PC-9 (cell line): ENCODE measurements at regions of chr11 and their contacts with region 1.

Region 1: GRCh38 chr11:3841426-3842350 is 929 bp upstream of the RHOG start:
- DNase-seq: peak; percentile 64 to 76
- H3K4me3 ChIP-seq: peak overlapping the region; percentile 68
- H3K27ac ChIP-seq: peak overlapping the region; percentile 39
- H3K4me1 ChIP-seq: peaks cover 10% of the 10 kb centered on the region
- H3K27me3 ChIP-seq: no peaks in the 10 kb centered on the region
- CTCF ChIP-seq: peak; percentile 70

Region 2: DNA sequence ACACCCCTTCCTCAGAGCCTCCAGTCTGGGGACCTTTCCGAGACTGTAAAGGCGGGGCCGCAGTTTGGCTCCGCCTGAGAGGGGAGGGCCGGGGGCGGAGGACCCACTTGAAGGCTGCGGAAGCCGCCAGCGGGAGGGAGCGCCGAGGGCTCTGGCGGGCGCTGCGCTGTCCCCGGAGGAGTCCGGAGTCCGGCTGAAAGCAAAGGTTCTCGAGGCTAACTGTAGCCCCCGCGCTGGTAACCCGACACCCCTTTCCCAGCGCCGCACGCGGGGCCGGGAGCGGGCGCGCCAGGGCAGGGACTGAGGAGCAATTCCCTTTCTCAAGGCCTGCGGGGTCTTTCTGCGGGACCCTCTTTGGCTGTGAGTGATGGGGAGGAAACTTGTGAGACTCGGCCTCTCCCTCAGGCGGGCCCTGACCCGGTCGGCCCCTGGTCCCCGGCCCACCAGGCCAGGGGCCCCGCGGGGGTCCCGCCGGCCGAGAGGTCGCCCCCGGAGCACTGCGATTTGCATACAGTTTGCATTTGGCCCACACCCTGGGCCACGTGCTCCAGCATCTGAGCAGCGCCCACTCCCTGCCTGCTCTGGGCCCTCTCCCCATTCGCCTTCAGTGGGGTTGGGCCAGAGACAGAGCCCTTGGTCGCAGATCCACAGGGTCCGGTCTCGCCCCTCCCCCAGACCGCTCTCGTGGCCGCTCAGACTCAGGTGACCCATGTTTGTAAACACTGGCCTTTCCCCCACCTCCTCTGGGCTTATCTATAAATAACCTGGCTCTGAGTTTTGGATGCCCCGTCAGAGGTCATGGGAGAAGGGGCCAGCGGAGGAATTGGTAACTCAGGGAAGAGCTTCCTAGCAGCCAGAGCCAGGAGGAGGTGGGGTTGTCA is 199.4 kb before region 1 on chr11:
- CTCF ChIA-PET with region 1: no interaction called
- POLR2A ChIA-PET with region 1: interaction called, 10 read pairs
- intact Hi-C with region 1: no loop called
- DNase-seq: peak; percentile 37 to 71
- H3K4me3 ChIP-seq: peak overlapping the region; percentile 55
- H3K27ac ChIP-seq: no peak overlapping the region
- H3K4me1 ChIP-seq: no peaks in the 10 kb centered on the region; the same call in 1 of the 2 replicates
- H3K27me3 ChIP-seq: no peaks in the 10 kb centered on the region
- CTCF ChIP-seq: no peak

Region 3: GRCh38 chr11:3797329-3798095 is 44.2 kb before region 1 on chr11 and contains the start of gene NUP98:
- CTCF ChIA-PET with region 1: no interaction called
- POLR2A ChIA-PET with region 1: interaction called, 14 read pairs
- intact Hi-C with region 1: no loop called
- DNase-seq: peak; percentile 97 to 98
- H3K4me3 ChIP-seq: peak within 1 kb of the TSS; percentile 86
- H3K27ac ChIP-seq: peak within 1 kb of the TSS; percentile 59
- H3K4me1 ChIP-seq: peaks cover 17% of the 10 kb centered on the region
- H3K27me3 ChIP-seq: no peaks in the 10 kb centered on the region
- CTCF ChIP-seq: no peak
- total RNA-seq, gene NUP98: 49.8 and 59.7 TPM in 2 replicates

Region 4: GRCh38 chr11:3807909-3808860 is 33.5 kb before region 1 on chr11 and contains the start of gene PGAP2:
- CTCF ChIA-PET with region 1: interaction called, 4 read pairs
- POLR2A ChIA-PET with region 1: no interaction called
- intact Hi-C with region 1: loop called (anchors 2 kb)
- DNase-seq: peak; percentile 62 to 63
- H3K4me3 ChIP-seq: peak within 1 kb of the TSS; percentile 86
- H3K27ac ChIP-seq: peak within 1 kb of the TSS; percentile 32; the same call in 1 of the 2 replicates
- H3K4me1 ChIP-seq: peaks cover 3% of the 10 kb centered on the region
- H3K27me3 ChIP-seq: no peaks in the 10 kb centered on the region
- CTCF ChIP-seq: peak; percentile 64; the same call in 1 of the 2 replicates
- total RNA-seq, gene PGAP2: 37.7 and 39.5 TPM in 2 replicates

Region 5: DNA sequence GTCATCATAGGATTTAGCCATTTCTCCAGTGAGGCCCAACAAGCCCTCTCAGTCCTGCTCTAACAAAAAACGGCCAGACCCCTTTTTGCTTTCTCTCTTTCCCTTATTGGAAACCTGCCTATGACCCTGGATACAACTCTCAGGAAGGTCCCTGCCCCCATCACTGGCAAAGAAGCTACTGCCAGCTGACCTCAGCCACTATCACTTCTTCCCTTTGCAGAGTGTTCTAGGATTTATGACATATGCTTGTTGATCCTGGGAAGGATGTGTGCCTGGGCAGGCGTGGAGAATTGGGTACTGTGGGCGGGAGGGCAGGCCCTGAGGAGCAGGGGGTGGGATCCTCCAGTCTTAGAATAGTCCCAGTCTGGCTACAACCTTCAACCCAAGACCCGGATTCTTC is 25.8 kb before region 1 on chr11:
- CTCF ChIA-PET with region 1: interaction called, 3 read pairs
- POLR2A ChIA-PET with region 1: no interaction called
- intact Hi-C with region 1: loop called (anchors 1 kb)
- DNase-seq: no peak
- H3K4me3 ChIP-seq: no peak overlapping the region
- H3K27ac ChIP-seq: 0 out of 2 replicates have a peak overlapping the region, but pooled peaks have one; percentile 19
- H3K4me1 ChIP-seq: peaks cover 19% of the 10 kb centered on the region
- H3K27me3 ChIP-seq: no peaks in the 10 kb centered on the region
- CTCF ChIP-seq: no peak

Region 6: GRCh38 chr11:4167758-4168157 is 326.1 kb after region 1 on chr11:
- CTCF ChIA-PET with region 1: no interaction called
- POLR2A ChIA-PET with region 1: no interaction called
- intact Hi-C with region 1: no loop called
- DNase-seq: no peak
- H3K4me3 ChIP-seq: no peak overlapping the region
- H3K27ac ChIP-seq: no peak overlapping the region
- H3K4me1 ChIP-seq: no peaks in the 10 kb centered on the region
- H3K27me3 ChIP-seq: no peaks in the 10 kb centered on the region
- CTCF ChIP-seq: no peak